Activated naive CD4-positive, alpha-beta T cell treated with anti-CD3 and anti-CD28 coated beads for 36 hours (primary cell): ENCODE measurements at regions of chr17 and their contacts with region 1.

Region 1: GRCh38 chr17:68247445-68248198 is at the start of gene AMZ2:
- DNase-seq: peak; percentile 94
- H3K4me3 Mint-ChIP-seq: peak within 1 kb of the TSS; percentile 89
- H3K27ac Mint-ChIP-seq: peak within 1 kb of the TSS; percentile 95
- H3K4me1 Mint-ChIP-seq: peaks cover 31% of the 10 kb centered on the region
- H3K27me3 Mint-ChIP-seq: no peaks in the 10 kb centered on the region
- total RNA-seq, gene AMZ2: 190 to 195 TPM

Region 2: GRCh38 chr17:68179926-68180285 is 67.7 kb before region 1 on chr17:
- CTCF ChIA-PET with region 1: interaction called, 3 read pairs
- intact Hi-C with region 1: loop called (anchors 2 kb)
- DNase-seq: no peak
- H3K4me3 Mint-ChIP-seq: no peak overlapping the region
- H3K27ac Mint-ChIP-seq: no peak overlapping the region
- H3K4me1 Mint-ChIP-seq: peaks cover 41% of the 10 kb centered on the region
- H3K27me3 Mint-ChIP-seq: no peaks in the 10 kb centered on the region

Region 3: DNA sequence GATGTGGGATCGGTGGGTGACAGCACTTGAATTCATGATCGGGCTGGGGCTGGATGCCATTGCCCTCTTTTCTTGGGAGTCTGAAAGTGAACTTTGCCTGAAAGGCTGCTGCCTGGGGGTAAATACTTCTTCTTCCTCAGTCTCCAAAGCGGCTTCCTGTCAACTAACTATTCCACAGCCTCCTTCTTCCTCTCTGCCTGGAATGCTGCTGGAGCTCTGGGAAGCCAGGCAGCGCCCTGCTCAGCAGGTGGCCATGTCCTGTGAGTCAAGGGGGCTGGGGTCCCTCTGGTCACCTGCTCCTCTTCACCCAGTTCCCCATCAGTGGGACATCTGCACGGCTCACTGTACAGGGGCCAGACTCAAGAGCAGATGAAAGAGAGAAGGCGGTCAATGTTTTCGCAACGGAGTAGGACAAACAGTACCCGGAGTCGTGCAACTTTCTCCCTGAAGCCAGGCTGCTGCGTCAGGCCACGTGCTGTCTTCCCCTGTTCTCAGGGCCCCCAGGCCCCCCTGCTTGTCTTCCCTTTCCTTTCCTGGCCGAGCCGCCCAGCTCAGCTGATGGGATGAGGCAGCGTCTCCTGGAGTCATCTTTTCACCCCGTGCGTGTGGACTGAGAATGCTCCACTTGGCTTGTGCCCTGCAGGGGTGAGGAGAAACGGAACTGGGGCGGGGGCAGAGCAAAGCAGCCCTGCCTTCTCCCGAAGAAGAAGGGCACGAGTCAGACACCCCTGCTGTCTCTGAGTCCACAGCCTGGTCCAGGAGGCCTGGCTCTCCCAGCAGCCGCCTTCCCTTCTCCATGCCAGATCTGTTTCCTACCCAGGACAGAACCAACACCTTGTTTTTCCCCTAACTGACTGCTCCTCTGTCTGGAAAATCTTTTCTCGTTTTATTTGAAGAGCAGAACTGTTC is 130.5 kb after region 1 on chr17:
- CTCF ChIA-PET with region 1: no interaction called
- intact Hi-C with region 1: no loop called
- DNase-seq: no peak
- H3K4me3 Mint-ChIP-seq: no peak overlapping the region
- H3K27ac Mint-ChIP-seq: no peak overlapping the region
- H3K4me1 Mint-ChIP-seq: no peaks in the 10 kb centered on the region
- H3K27me3 Mint-ChIP-seq: no peaks in the 10 kb centered on the region